Endothelial cell of umbilical vein (primary cell): ENCODE measurements at regions of chr1 and their contacts with region 1.

Region 1: GRCh38 chr1:231828182-231828920 is 201.8 kb downstream of the DISC1 start:
- DNase-seq: peak; percentile 96
- H3K4me3 ChIP-seq: no peak overlapping the region
- H3K27ac ChIP-seq: peak overlapping the region; percentile 92
- H3K4me1 ChIP-seq: peaks cover 29% of the 10 kb centered on the region
- H3K27me3 ChIP-seq: no peaks in the 10 kb centered on the region
- CTCF ChIP-seq: no peak
- POLR2A ChIP-seq: no peak

Region 2: DNA sequence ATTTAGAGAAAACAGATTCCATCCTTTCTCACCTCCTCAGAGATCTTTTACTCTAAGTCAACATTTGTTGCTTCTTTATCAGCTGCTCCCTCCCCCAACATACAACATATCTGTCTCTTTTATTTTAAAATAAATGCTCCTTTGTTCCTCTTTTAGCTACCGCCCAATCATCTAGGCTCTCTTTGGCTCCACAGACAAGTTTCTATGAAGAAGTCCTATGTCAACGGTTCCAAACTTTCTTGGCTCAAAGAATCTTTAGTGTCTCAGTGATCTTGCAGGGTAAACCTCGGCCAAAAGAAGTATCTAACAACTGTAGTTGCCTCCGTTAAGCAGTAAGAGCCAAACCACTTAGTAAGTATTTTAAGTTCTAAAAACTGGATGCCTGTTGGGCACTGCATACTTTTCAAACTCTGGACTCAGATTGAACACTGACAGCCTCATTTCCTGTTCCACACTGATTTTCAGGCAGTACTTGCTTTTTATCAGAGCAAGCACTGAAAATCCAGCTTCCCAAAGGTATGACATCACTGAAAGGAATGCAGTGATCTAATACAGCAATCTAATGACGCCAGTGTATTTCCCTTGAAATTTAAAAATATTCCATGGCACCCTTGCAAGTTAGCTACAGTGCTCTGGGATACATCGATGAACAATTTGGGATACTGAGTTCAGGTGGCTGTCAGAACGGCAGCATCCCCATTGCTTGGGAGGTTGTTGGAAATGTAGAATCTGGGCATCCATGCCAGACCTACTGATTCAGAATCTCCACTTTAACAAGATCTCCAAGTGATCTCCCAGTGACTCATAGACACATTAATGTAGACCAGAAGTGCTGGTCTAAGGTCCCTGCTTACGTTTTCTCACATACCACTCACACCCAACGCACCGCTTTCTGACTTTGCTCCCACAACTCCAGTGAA is 433.0 kb before region 1 on chr1:
- CTCF ChIA-PET with region 1: no interaction called
- POLR2A ChIA-PET with region 1: no interaction called
- dilution Hi-C with region 1: no loop called
- intact Hi-C with region 1: loop called (anchors 10 kb)
- DNase-seq: peak; percentile 93
- H3K4me3 ChIP-seq: peak overlapping the region in 1 of 3 experiments; percentile 18
- H3K27ac ChIP-seq: peak overlapping the region; percentile 100
- H3K4me1 ChIP-seq: peaks cover 47% of the 10 kb centered on the region
- H3K27me3 ChIP-seq: no peaks in the 10 kb centered on the region
- CTCF ChIP-seq: no peak
- POLR2A ChIP-seq: peak; percentile 51

Region 3: DNA sequence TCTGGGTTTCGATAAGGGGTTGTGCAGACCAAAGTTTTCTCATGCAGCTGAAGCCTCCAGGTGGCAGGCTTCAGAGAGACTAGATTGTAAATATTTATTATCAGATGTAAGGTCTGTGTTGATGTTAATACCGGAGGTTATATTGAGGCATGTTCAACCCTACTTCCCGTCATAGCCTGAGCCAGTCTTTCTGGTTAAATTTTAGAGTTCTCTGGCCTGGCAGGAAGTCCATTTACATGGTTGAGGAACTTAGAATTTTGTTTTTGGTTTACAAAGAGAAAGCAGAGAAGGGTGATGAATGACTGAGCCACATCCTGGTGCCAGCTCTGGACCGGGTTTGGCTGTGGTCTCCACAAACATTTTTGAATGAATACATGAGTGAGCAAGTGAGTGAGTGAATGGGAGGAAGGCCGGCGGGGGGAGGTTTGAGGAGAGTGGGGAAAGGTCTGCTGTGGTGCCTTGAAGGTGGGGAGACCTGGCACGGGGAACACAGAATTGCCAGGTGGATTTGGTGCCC is 16.7 kb after region 1 on chr1:
- CTCF ChIA-PET with region 1: interaction called, 3 read pairs
- POLR2A ChIA-PET with region 1: no interaction called
- dilution Hi-C with region 1: no loop called
- intact Hi-C with region 1: loop called (anchors 1 kb)
- DNase-seq: peak; percentile 73
- H3K4me3 ChIP-seq: no peak overlapping the region
- H3K27ac ChIP-seq: no peak overlapping the region
- H3K4me1 ChIP-seq: peaks cover 9% of the 10 kb centered on the region
- H3K27me3 ChIP-seq: no peaks in the 10 kb centered on the region
- CTCF ChIP-seq: no peak
- POLR2A ChIP-seq: no peak

Region 4: GRCh38 chr1:231990388-231990787 is 162.0 kb after region 1 on chr1:
- CTCF ChIA-PET with region 1: no interaction called
- POLR2A ChIA-PET with region 1: no interaction called
- dilution Hi-C with region 1: no loop called
- intact Hi-C with region 1: loop called (anchors 5 kb)
- DNase-seq: peak; percentile 93
- H3K4me3 ChIP-seq: no peak overlapping the region
- H3K27ac ChIP-seq: peak overlapping the region; percentile 23
- H3K4me1 ChIP-seq: peaks cover 18% of the 10 kb centered on the region
- H3K27me3 ChIP-seq: no peaks in the 10 kb centered on the region
- CTCF ChIP-seq: no peak
- POLR2A ChIP-seq: peak; percentile 65

Region 5: DNA sequence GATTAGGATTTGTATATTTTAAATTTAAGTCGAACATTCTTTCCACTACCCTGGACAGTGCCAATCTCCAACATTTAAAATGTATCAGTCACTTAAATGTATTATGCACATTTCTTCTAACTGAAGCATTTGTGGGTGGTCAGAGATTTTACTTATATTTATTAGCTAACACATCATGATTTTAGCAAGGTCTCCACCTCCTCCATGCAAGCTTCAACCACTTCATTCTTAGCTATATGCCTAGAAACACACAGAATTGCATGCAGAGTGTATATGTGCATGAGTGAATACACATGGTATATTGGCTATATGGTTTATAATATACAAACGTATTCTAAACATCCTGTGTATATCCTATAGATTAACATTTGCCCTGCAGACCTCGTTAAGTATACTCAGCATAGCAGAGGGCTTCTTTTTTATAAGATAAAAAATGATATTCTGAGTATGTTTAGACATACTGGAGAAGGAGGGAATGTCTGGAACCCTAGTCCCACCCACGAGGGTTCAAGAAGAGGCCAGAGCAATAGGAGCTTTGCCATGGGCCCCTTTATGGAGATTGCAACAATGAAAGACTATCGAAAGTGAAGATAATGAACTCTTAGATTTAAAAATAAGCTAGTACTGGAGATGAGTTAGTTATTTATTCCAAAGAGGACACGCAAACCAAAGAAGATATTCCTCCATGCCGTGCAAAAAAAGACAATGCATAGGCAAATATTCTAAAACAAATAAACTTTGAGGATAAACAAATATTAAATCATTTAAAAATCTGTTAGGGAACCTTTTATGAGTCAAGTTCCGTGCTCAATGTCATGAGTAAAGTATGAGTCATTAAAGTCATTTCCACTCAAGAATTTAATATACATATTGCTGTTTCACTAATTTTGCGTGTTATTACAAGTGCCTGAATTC is 321.2 kb after region 1 on chr1:
- CTCF ChIA-PET with region 1: no interaction called
- POLR2A ChIA-PET with region 1: no interaction called
- dilution Hi-C with region 1: no loop called
- intact Hi-C with region 1: loop called (anchors 5 kb)
- DNase-seq: peak; percentile 81
- H3K4me3 ChIP-seq: peak overlapping the region in 1 of 3 experiments; percentile 13
- H3K27ac ChIP-seq: peak overlapping the region; percentile 45
- H3K4me1 ChIP-seq: peaks cover 22% of the 10 kb centered on the region
- H3K27me3 ChIP-seq: no peaks in the 10 kb centered on the region
- CTCF ChIP-seq: no peak
- POLR2A ChIP-seq: no peak